Activated CD4-positive, alpha-beta T cell treated with anti-CD3 and anti-CD28 coated beads, Interleukin-2, amount 10 ng/mL, durations not matched to agents 24 days and 14 days (primary cell): ENCODE measurements at regions of chr11 and their contacts with region 1.

Region 1: GRCh38 chr11:75241036-75241905 is 697 bp downstream of the TPBGL start:
- DNase-seq: peak; percentile 98
- H3K4me3 Mint-ChIP-seq: peak overlapping the region; percentile 79
- H3K27ac Mint-ChIP-seq: no peak overlapping the region
- H3K4me1 Mint-ChIP-seq: peaks cover 6% of the 10 kb centered on the region
- H3K27me3 Mint-ChIP-seq: peaks cover 55% of the 10 kb centered on the region

Region 2: DNA sequence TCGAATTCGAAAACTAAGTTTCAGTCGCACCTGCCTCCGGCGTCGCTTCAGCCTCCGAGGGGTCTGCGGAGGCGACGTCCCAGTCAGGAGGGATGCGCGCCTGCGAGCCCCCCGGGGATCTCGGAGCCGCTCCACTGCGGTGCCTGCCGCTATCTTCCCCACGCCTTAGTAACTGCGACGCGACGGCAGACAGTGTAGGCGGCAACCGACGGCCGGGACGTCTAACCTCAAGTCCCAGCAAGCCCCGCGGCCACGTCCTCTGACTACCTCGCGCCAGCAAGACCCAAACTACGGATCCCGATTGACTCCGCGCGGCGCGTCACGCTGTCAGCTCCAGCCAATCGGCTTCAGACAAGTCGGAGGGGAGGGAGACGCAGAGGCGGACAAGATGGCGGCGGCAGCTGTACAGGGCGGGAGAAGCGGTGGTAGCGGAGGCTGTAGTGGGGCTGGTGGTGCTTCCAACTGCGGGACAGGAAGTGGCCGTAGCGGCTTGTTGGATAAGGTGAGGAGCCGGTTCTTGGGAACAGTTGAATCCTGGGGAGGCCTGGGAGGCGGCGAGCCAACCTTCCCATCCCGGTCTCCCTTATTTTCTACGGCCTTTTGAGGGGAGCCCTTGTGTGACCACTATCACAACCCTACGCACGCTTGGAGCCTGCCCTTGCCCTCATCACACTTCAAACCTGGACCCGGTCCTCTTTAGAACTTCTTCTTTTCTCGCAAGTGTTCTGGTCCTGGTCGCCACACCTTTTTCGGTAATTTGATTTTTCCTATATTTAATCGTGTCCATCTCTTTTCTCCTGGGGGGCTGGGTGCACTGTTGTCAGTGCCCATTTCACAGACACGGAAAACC is 292.1 kb before region 1 on chr11 and contains the starts of genes SPCS2 and XRRA1:
- intact Hi-C with region 1: loop called (anchors 2 kb)
- DNase-seq: peak; percentile 99
- H3K4me3 Mint-ChIP-seq: peak within 1 kb of the TSS; percentile 91
- H3K27ac Mint-ChIP-seq: peak within 1 kb of the TSS; percentile 89
- H3K4me1 Mint-ChIP-seq: peaks cover 37% of the 10 kb centered on the region
- H3K27me3 Mint-ChIP-seq: no peaks in the 10 kb centered on the region
- total RNA-seq, gene SPCS2: 154 and 169 TPM in 2 replicates
- total RNA-seq, gene XRRA1: 11.0 and 11.4 TPM in 2 replicates

Region 3: GRCh38 chr11:75142714-75143419 is 98.4 kb before region 1 on chr11:
- intact Hi-C with region 1: loop called (anchors 1 kb)
- DNase-seq: peak; percentile 93
- H3K4me3 Mint-ChIP-seq: peak overlapping the region; percentile 74
- H3K27ac Mint-ChIP-seq: peak overlapping the region; percentile 90
- H3K4me1 Mint-ChIP-seq: peaks cover 45% of the 10 kb centered on the region
- H3K27me3 Mint-ChIP-seq: peaks cover 9% of the 10 kb centered on the region

Region 4: DNA sequence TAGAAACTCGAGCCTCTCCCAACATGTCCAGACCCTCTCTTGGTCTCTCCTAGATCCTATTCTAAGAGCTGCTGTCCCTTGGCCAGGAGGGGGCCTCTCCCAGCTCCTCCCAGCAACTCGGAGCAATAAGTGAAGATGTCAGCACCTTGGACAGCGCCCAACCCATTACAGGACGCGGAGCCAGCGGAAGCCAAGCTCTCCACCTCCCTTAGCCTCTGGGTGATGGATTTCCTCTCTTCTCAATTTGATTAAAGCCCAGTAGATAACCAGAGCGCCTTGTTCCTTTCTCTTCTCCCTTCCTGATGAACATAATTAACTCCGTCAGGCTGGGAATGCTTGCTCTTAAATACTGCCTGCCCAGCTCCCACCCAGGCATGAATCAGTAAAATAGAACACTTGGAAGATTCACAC is 26.9 kb before region 1 on chr11:
- intact Hi-C with region 1: loop called (anchors 1 kb)
- DNase-seq: peak; percentile 95
- H3K4me3 Mint-ChIP-seq: no peak overlapping the region
- H3K27ac Mint-ChIP-seq: no peak overlapping the region
- H3K4me1 Mint-ChIP-seq: peaks cover 1% of the 10 kb centered on the region
- H3K27me3 Mint-ChIP-seq: peaks cover 21% of the 10 kb centered on the region

Region 5: GRCh38 chr11:75706260-75706729 is 465.0 kb after region 1 on chr11:
- intact Hi-C with region 1: no loop called
- DNase-seq: peak; percentile 89
- H3K4me3 Mint-ChIP-seq: no peak overlapping the region
- H3K27ac Mint-ChIP-seq: no peak overlapping the region
- H3K4me1 Mint-ChIP-seq: peaks cover 7% of the 10 kb centered on the region
- H3K27me3 Mint-ChIP-seq: peaks cover 17% of the 10 kb centered on the region

Region 6: GRCh38 chr11:75814686-75815344 is 573.5 kb after region 1 on chr11 and contains the start of gene UVRAG:
- intact Hi-C with region 1: loop called (anchors 5 kb)
- DNase-seq: peak; percentile 100
- H3K4me3 Mint-ChIP-seq: no peak within 1 kb of the TSS
- H3K27ac Mint-ChIP-seq: peak within 1 kb of the TSS; percentile 94
- H3K4me1 Mint-ChIP-seq: peaks cover 12% of the 10 kb centered on the region
- H3K27me3 Mint-ChIP-seq: no peaks in the 10 kb centered on the region
- total RNA-seq, gene UVRAG: 18.2 and 19.2 TPM in 2 replicates